Right ventricle myocardium superior (tissue), 1 donor: ENCODE measurements at regions of chr2 and their contacts with region 1.

Region 1: DNA sequence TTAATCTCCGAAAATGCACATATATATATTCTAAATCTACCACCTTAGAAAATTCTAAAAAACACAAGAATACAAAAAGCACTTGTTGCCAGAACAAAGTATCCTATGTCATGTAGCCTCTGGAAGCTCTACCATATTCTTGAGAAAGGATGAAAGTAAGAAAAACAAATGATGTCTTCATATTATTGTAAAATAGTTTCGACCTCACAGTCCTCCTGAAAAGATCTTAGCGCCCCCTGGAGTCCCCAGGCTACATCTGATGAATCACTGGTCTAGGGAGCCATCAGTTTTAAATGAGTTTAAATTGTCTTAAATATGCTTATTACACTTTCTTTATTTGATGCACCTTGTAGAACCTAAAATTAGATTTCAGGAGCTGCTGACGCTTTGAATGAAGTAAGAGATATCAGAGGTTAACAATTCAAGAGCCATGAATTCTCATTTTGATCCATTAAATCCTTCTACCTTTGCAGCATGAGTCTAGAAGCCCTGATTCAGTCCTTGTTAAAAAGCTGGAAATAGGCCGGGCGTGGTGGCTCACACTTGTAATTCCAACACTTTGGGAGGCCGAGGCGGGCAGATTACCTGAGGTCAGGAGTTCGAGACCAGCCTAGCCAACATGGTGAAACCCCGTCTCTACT is 138.8 kb downstream of the MCFD2 start:
- DNase-seq: no peak
- ATAC-seq: no peak

Region 2: DNA sequence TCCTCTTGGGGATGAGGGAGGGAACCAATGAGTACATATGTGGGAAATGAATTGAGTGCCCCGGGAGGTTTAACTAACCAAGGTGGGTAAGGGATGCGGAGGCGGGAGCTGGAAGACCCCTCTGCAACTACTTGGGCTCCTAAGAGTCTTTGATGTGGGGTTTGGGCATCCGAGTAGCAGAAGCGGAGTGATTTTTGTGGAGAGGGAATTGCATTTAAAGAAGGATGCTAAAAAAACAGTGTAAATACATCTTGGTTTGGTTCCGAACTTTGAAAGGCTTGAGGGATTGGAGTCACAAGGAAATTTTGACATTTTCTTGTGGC is 76.9 kb before region 1 on chr2:
- intact Hi-C with region 1: loop called (anchors 10 kb)
- DNase-seq: no peak
- ATAC-seq: no peak

Region 3: GRCh38 chr2:46876741-46877384 is 100.1 kb after region 1 on chr2:
- intact Hi-C with region 1: no loop called
- DNase-seq: no peak
- ATAC-seq: peak; percentile 69